Head of caudate nucleus (tissue), 42 donors: ENCODE measurements at regions of chr6 and their contacts with region 1.

Region 1: DNA sequence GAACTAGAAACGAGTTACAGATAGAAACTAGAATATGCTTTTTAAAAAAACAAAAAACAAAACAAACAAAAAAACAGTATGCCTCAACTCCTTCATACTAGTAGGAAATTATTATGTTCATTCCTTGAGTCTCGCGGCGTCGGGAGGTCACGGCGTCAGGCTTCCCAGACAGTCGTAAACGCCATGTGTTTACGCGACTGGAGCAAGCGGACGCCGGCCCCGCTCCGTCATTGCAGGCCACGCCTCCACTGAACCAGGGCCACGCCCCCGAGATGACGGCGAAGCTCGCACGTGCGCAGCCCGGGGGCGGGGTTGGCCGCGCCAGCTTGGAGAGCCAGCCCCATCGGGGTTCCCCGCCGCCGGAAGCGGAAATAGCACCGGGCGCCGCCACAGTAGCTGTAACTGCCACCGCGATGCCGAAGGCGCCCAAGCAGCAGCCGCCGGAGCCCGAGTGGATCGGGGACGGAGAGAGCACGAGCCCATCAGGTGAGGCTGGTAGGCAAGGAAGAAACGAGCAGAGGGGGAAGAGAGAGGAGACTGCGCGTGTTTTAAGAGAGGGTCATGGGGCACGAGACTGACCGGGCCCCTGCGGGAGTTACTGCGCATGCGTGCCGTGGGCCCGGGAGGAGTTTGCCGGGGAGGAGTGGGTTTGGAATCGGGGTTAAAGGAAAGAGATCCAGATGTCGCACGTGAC is at the start of gene ABCF1:
- DNase-seq: peak; percentile 95 to 100 (median 99)

Region 2: DNA sequence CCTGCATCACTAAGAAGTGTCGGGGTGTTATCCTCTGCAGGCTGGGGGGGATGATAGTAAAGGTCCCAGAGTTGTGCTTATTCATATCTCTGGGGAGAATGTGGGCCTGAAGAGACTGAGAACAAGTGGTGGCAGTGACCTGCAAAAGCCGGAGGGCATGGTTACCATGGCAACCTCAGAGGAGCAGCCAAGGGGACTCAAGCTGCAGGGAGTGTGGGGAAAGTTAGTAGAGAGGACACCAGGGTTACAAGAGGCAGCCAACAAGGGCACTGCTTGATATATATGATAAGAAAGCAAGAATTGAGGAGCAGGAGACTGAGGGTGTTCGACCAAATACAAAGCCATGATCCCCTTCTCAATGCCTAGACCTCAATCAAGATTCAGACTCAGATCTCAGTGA is 801.9 kb before region 1 on chr6:
- intact Hi-C with region 1: no loop called
- DNase-seq: peak in 1 of 42 donors; percentile 8

Region 3: GRCh38 chr6:30443657-30444450 is 127.4 kb before region 1 on chr6:
- intact Hi-C with region 1: no loop called
- DNase-seq: peak in 22 of 42 donors; percentile 20 to 79 (median 48)

Region 4: DNA sequence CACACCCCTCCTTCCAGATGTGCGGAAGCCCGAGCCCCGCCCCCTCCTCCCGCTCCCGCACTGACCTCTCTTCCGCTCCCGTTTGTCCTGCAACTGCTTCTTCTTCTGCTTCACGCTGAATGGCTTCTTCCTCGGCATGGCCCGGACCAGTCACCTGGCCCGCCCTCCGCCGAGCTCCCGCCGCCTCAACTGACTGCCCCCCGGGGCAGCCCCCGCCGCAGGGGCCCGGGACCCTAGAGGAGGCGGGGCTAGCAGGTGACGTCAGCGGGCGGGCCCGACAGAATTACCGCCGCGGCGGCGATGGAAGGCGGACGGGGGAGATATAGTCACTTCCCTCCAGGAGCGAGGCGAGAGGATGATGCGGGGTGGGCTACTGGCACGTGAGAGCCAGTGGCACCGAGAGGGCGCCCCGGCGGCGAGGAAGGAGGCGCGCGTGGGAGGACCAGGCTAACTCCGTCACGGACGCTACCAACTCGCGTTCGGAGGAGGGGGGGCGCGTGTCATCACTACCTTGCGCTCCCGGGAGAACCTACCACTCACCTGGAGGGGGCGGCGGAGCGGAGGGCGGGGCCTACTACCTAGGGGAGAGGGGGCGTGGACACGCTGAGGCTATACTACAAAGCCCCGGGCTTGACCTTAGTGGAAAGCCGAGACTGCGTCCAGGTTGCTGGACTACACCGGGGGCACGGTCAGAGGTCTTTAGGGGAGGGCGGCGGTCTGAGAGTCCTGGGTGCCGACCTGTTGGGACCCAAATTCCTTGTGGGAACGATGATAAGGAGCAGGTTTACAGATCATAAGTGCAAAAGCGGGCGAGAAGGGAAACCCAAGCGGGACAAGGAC is 14.9 kb before region 1 on chr6 and contains the start of gene GNL1:
- intact Hi-C with region 1: loop called (anchors 2 kb)
- DNase-seq: peak; percentile 89 to 98 (median 94)

Region 5: GRCh38 chr6:30616811-30617564 is 45.8 kb after region 1 on chr6 and contains the start of gene PPP1R10:
- intact Hi-C with region 1: loop called (anchors 5 kb)
- DNase-seq: peak; percentile 96 to 100 (median 99)

Region 6: GRCh38 chr6:30752157-30752927 is 181.1 kb after region 1 on chr6:
- intact Hi-C with region 1: no loop called
- DNase-seq: peak in 38 of 42 donors; percentile 6 to 81 (median 39)